ENCODE measurements at regions of chr20 and their contacts with region 1.

Region 1: GRCh38 chr20:24100385-24101011 is 111.9 kb upstream of the GGTLC1 start:
- DNase-seq: peak; percentile 16 to 78 (median 59)
- ATAC-seq: peak; percentile 93
- H3K4me3 ChIP-seq: no peak overlapping the region
- H3K4me3 Mint-ChIP-seq: no peak overlapping the region
- H3K27ac ChIP-seq: no peak overlapping the region
- H3K27ac Mint-ChIP-seq: no peak overlapping the region
- H3K4me1 ChIP-seq: peaks cover 4% of the 10 kb centered on the region
- H3K4me1 Mint-ChIP-seq: peaks cover 4% of the 10 kb centered on the region
- H3K27me3 ChIP-seq: no peaks in the 10 kb centered on the region
- H3K27me3 Mint-ChIP-seq: peaks cover 2% of the 10 kb centered on the region
- CTCF ChIP-seq: peak; percentile 75

Region 2: GRCh38 chr20:22878166-22878565 is 1222.3 kb before region 1 on chr20:
- CTCF ChIA-PET with region 1: no interaction called
- POLR2A ChIA-PET with region 1: no interaction called
- intact Hi-C with region 1: no loop called
- DNase-seq: no peak
- ATAC-seq: no peak
- H3K4me3 ChIP-seq: no peak overlapping the region
- H3K4me3 Mint-ChIP-seq: no peak overlapping the region
- H3K27ac ChIP-seq: no peak overlapping the region
- H3K27ac Mint-ChIP-seq: no peak overlapping the region
- H3K4me1 ChIP-seq: no peaks in the 10 kb centered on the region
- H3K4me1 Mint-ChIP-seq: no peaks in the 10 kb centered on the region
- H3K27me3 ChIP-seq: no peaks in the 10 kb centered on the region
- H3K27me3 Mint-ChIP-seq: peaks cover 3% of the 10 kb centered on the region
- CTCF ChIP-seq: no peak

Region 3: DNA sequence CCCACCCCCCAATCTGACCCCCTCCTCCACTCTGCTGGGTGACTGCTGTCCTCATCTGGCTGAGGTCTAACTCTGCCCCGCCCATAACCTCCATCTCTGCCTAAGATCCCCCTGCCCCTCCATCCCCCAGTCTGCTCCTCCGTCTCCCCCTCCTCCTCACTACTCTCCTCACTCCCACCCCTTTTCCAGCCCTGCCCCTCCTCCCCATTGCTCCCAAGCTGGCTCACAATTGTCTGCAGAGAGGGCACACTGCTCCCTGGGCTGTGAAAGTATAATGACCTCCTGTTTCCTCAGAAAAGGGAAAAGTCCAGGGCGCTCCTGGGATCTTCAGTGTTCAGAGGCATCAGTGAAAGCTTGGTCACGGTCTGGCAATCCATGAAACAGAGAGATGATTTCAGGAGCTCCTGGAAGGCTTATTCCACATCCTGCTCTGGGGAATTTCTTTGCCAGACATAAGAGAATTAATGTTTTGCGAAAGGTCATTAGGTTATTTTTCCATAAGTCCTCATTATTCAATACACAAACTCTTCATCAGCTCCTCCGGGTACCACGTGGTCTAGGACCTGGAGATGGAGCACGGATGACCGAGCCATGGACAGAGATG is 242.4 kb before region 1 on chr20:
- CTCF ChIA-PET with region 1: no interaction called
- POLR2A ChIA-PET with region 1: no interaction called
- intact Hi-C with region 1: no loop called
- DNase-seq: no peak
- ATAC-seq: no peak
- H3K4me3 ChIP-seq: no peak overlapping the region
- H3K4me3 Mint-ChIP-seq: no peak overlapping the region
- H3K27ac ChIP-seq: no peak overlapping the region
- H3K27ac Mint-ChIP-seq: no peak overlapping the region
- H3K4me1 ChIP-seq: no peaks in the 10 kb centered on the region
- H3K4me1 Mint-ChIP-seq: no peaks in the 10 kb centered on the region
- H3K27me3 ChIP-seq: no peaks in the 10 kb centered on the region
- H3K27me3 Mint-ChIP-seq: peaks cover 3% of the 10 kb centered on the region
- CTCF ChIP-seq: no peak

Region 4: GRCh38 chr20:23995905-23996666 is 104.4 kb before region 1 on chr20:
- CTCF ChIA-PET with region 1: interaction called, 5 read pairs
- POLR2A ChIA-PET with region 1: no interaction called
- intact Hi-C with region 1: loop called (anchors 5 to 10 kb)
- DNase-seq: peak; percentile 13 to 81 (median 68)
- ATAC-seq: peak; percentile 38
- H3K4me3 ChIP-seq: no peak overlapping the region
- H3K4me3 Mint-ChIP-seq: no peak overlapping the region
- H3K27ac ChIP-seq: no peak overlapping the region
- H3K27ac Mint-ChIP-seq: no peak overlapping the region
- H3K4me1 ChIP-seq: no peaks in the 10 kb centered on the region
- H3K4me1 Mint-ChIP-seq: peaks cover 2% of the 10 kb centered on the region
- H3K27me3 ChIP-seq: no peaks in the 10 kb centered on the region
- H3K27me3 Mint-ChIP-seq: peaks cover 2% of the 10 kb centered on the region
- CTCF ChIP-seq: peak; percentile 95

Region 5: GRCh38 chr20:24001712-24002405 is 98.6 kb before region 1 on chr20:
- CTCF ChIA-PET with region 1: interaction called, 5 read pairs
- POLR2A ChIA-PET with region 1: no interaction called
- intact Hi-C with region 1: loop called (anchors 5 to 10 kb)
- DNase-seq: no peak
- ATAC-seq: no peak
- H3K4me3 ChIP-seq: no peak overlapping the region
- H3K4me3 Mint-ChIP-seq: no peak overlapping the region
- H3K27ac ChIP-seq: no peak overlapping the region
- H3K27ac Mint-ChIP-seq: no peak overlapping the region
- H3K4me1 ChIP-seq: no peaks in the 10 kb centered on the region
- H3K4me1 Mint-ChIP-seq: no peaks in the 10 kb centered on the region
- H3K27me3 ChIP-seq: no peaks in the 10 kb centered on the region
- H3K27me3 Mint-ChIP-seq: peaks cover 2% of the 10 kb centered on the region
- CTCF ChIP-seq: no peak

Region 6: GRCh38 chr20:24160563-24161375 is 60.3 kb after region 1 on chr20:
- CTCF ChIA-PET with region 1: interaction called, 4 read pairs
- POLR2A ChIA-PET with region 1: no interaction called
- intact Hi-C with region 1: loop called in 1 of 2 experiments (anchors 1 kb)
- DNase-seq: peak in 2 of 9 experiments; percentile 20 to 46
- ATAC-seq: no peak
- H3K4me3 ChIP-seq: no peak overlapping the region
- H3K4me3 Mint-ChIP-seq: no peak overlapping the region
- H3K27ac ChIP-seq: no peak overlapping the region
- H3K27ac Mint-ChIP-seq: no peak overlapping the region
- H3K4me1 ChIP-seq: no peaks in the 10 kb centered on the region
- H3K4me1 Mint-ChIP-seq: peaks cover 2% of the 10 kb centered on the region
- H3K27me3 ChIP-seq: no peaks in the 10 kb centered on the region
- H3K27me3 Mint-ChIP-seq: peaks cover 2% of the 10 kb centered on the region
- CTCF ChIP-seq: peak; percentile 24

Measured in CD8-positive, alpha-beta T cell (primary cell).